Activated CD4-positive, alpha-beta T cell treated with anti-CD3 and anti-CD28 coated beads for 36 hours (primary cell): ENCODE measurements at regions of chr16 and their contacts with region 1.

Region 1: DNA sequence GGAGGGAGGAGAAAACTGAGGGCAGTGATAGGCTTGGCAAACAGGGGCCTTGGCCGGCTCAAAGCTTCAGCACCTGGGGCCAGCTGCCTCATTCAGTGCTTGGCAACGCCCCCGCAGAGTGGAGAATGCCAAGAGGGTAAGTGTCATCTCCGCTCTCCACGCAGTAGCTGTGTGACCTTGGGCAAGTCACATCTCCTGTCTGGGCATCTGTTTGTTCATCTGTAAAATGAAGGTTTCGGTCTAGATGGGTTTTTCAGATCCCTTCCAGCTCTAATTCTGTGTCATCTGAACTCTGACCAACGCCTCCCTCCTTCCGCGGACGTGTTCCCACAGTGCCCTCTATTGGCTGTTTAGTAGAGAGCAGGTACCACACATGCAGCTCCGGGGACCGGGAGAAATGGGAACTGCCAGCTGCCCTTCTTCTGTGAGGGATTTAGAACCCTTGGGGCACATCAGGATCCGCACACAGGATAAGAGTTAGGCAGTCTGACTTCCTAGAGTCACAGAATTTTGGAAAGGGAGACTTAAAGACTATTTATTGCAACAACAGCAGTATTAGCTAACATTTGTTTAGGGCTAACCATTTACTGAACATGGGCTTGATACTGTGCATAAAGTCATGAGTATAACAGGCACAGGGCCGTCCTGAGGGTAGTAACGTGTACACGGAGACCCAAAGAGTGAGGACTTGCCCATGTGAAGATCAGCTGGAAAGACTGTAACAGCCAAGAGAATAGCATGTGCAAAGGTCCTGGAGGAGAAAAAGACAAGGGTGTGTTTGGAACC is 26.8 kb downstream of the GP2 start:
- DNase-seq: peak; percentile 63
- ATAC-seq: peak; percentile 51
- H3K4me3 Mint-ChIP-seq: no peak overlapping the region
- H3K27ac Mint-ChIP-seq: no peak overlapping the region
- H3K4me1 Mint-ChIP-seq: no peaks in the 10 kb centered on the region
- H3K27me3 Mint-ChIP-seq: peaks cover 18% of the 10 kb centered on the region

Region 2: DNA sequence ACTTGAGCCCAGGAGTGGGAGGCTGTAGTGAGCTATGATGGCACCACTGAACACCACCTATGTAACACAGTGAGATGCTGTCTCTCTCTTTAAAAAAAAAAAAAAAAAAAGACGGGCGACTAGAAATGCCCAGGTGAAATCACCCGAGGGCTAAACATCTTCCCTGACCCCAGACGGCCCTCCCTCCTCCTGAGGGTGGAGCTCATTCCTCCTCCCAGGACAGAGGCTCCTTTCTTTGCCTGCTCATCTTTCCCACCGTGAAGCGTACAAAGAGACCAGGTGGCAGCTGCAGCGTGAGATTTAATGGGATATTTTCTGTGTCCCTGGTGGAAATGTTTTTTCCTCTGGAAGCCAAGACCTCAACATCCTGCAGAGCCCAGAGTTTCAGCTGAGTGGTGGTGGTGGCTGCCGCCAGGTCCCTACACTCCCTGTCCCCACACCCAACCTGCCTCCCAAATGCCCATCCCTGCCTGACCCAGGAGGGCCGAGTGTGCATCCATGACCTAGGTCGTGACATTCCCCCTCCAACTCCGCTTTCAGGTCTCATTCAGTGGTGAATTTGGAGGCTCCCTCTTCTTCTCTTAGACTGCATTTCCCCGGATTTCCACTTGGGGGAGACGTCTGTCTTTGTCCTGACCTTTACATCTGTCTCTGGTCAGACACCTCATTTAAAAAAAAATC is 401.4 kb before region 1 on chr16:
- CTCF ChIA-PET with region 1: interaction called, 5 read pairs
- POLR2A ChIA-PET with region 1: no interaction called
- intact Hi-C with region 1: loop called (anchors 2 kb)
- DNase-seq: peak; percentile 63
- ATAC-seq: peak; percentile 65
- H3K4me3 Mint-ChIP-seq: no peak overlapping the region
- H3K27ac Mint-ChIP-seq: no peak overlapping the region
- H3K4me1 Mint-ChIP-seq: no peaks in the 10 kb centered on the region
- H3K27me3 Mint-ChIP-seq: peaks cover 6% of the 10 kb centered on the region

Region 3: DNA sequence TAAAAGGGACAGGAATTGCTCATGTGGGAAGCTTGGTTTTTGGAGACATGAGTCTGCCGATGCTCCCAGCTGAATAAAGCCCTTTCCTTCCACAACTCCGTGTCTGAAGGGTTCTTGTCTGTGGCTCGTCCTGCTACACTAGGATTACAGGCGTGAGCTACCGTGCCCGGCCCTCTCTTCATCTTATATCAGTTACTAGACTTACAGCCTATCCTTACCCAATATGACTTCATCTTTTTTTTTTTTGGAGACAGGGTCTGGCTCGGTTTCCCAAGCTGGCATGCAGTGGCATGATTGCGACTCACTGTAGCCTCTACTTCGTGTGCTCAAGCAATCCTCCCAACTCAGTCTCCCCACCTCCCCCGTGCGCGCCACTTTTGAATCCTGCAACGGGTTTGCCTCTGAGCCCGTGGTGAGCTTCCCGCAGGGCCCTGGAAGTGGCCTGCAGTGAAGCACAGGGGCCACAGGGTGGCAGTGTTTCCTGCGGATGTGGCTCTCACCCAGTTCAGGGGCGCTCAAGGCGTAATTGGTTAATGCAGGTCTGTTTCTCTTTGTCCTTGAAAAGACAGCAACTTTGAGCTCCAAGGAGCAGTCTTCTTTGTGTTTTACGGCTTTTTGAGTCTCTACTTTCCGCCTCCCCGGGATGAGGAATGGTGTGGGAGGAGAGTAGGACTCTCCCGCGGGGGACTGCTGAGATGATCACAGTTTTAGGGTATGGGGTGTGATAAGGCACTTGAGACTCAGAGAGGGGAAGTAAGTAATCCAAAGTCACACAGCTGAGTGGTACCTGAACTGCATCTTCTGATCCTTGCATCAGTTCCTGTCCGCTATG is 393.1 kb before region 1 on chr16:
- CTCF ChIA-PET with region 1: interaction called, 79 read pairs
- POLR2A ChIA-PET with region 1: interaction called, 3 read pairs
- intact Hi-C with region 1: loop called (anchors 1 to 2 kb)
- DNase-seq: peak; percentile 86
- ATAC-seq: peak; percentile 99
- H3K4me3 Mint-ChIP-seq: peak overlapping the region; percentile 47
- H3K27ac Mint-ChIP-seq: peak overlapping the region; percentile 47
- H3K4me1 Mint-ChIP-seq: peaks cover 9% of the 10 kb centered on the region
- H3K27me3 Mint-ChIP-seq: peaks cover 9% of the 10 kb centered on the region

Region 4: GRCh38 chr16:20102021-20102420 is 198.5 kb before region 1 on chr16:
- CTCF ChIA-PET with region 1: no interaction called
- POLR2A ChIA-PET with region 1: no interaction called
- intact Hi-C with region 1: loop called in 1 of 2 experiments (anchors 5 kb)
- DNase-seq: no peak
- ATAC-seq: no peak
- H3K4me3 Mint-ChIP-seq: no peak overlapping the region
- H3K27ac Mint-ChIP-seq: no peak overlapping the region
- H3K4me1 Mint-ChIP-seq: no peaks in the 10 kb centered on the region
- H3K27me3 Mint-ChIP-seq: peaks cover 6% of the 10 kb centered on the region

Region 5: GRCh38 chr16:20310421-20311395 is 10.2 kb after region 1 on chr16:
- CTCF ChIA-PET with region 1: interaction called, 13 read pairs
- POLR2A ChIA-PET with region 1: no interaction called
- intact Hi-C with region 1: no loop called
- DNase-seq: no peak
- ATAC-seq: no peak
- H3K4me3 Mint-ChIP-seq: no peak overlapping the region
- H3K27ac Mint-ChIP-seq: no peak overlapping the region
- H3K4me1 Mint-ChIP-seq: no peaks in the 10 kb centered on the region
- H3K27me3 Mint-ChIP-seq: peaks cover 13% of the 10 kb centered on the region

Region 6: GRCh38 chr16:20348365-20349185 is 48.1 kb after region 1 on chr16:
- CTCF ChIA-PET with region 1: no interaction called
- POLR2A ChIA-PET with region 1: no interaction called
- intact Hi-C with region 1: no loop called
- DNase-seq: peak; percentile 11
- ATAC-seq: no peak
- H3K4me3 Mint-ChIP-seq: no peak overlapping the region
- H3K27ac Mint-ChIP-seq: no peak overlapping the region
- H3K4me1 Mint-ChIP-seq: no peaks in the 10 kb centered on the region
- H3K27me3 Mint-ChIP-seq: peaks cover 2% of the 10 kb centered on the region